Activated naive CD4-positive, alpha-beta T cell treated with anti-CD3 and anti-CD28 coated beads for 36 hours (primary cell): ENCODE measurements at regions of chrX and their contacts with region 1.

Region 1: GRCh38 chrX:46665232-46666152 is 91.9 kb downstream of the CHST7 start:
- DNase-seq: peak; percentile 49
- H3K4me3 Mint-ChIP-seq: no peak overlapping the region
- H3K27ac Mint-ChIP-seq: peak overlapping the region; percentile 84
- H3K4me1 Mint-ChIP-seq: peaks cover 17% of the 10 kb centered on the region
- H3K27me3 Mint-ChIP-seq: no peaks in the 10 kb centered on the region

Region 2: DNA sequence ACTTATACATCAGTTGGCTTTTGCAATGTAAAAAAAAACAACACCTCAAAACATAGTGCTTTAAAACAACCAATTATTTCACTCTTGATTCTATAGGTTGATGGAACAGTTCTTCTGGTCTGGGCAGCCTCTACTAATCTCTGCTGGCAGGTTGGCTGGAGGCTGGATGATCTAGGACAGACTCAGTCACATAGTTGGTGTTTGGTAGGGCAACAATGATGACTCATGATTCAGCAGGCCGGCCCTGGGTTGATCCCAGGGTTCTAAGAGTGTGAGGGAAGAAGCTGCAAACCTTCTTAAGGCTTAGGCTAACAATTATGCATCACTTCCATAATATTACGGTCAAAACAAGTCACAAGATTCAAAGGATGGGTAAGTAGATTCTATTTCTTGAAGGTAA is 678.5 kb before region 1 on chrX:
- CTCF ChIA-PET with region 1: no interaction called
- intact Hi-C with region 1: loop called (anchors 10 kb)
- DNase-seq: no peak
- H3K4me3 Mint-ChIP-seq: no peak overlapping the region
- H3K27ac Mint-ChIP-seq: no peak overlapping the region
- H3K4me1 Mint-ChIP-seq: no peaks in the 10 kb centered on the region
- H3K27me3 Mint-ChIP-seq: no peaks in the 10 kb centered on the region

Region 3: DNA sequence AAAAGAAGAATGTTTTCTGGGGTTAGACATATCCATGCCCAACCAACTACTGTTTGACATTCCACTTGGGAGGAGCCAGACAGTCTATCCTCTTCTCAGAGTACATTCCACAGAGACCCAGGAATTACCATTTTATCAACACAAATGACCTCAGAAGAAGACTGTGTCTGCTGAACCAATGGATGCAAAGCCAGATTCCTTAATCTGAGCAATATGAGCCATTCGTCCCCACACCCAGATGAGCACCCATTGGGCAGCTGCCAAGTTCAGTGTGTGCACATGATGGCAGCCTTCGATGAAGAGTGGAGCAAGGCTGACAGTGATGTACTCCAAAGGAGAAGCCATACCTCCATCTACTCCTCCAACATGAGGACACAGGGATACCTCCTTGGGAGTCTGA is 231.6 kb before region 1 on chrX:
- CTCF ChIA-PET with region 1: no interaction called
- intact Hi-C with region 1: no loop called
- DNase-seq: no peak
- H3K4me3 Mint-ChIP-seq: no peak overlapping the region
- H3K27ac Mint-ChIP-seq: no peak overlapping the region
- H3K4me1 Mint-ChIP-seq: no peaks in the 10 kb centered on the region
- H3K27me3 Mint-ChIP-seq: no peaks in the 10 kb centered on the region